Right lobe of liver (tissue), 6 donors: ENCODE measurements at regions of chr10 and their contacts with region 1.

Region 1: GRCh38 chr10:128069351-128070051 is 56.7 kb downstream of the MKI67 start:
- DNase-seq: peak in 2 of 3 donors; percentile 77 to 82
- ATAC-seq: peak; percentile 82 to 89 (median 84)
- H3K4me3 ChIP-seq: no peak overlapping the region
- H3K27ac ChIP-seq: no peak overlapping the region
- H3K4me1 ChIP-seq: no peaks in the 10 kb centered on the region
- H3K27me3 ChIP-seq: no peaks in the 10 kb centered on the region
- CTCF ChIP-seq: peak; percentile 75 to 87 (median 82)
- POLR2A ChIP-seq: no peak

Region 2: GRCh38 chr10:127906548-127907377 is 162.7 kb before region 1 on chr10 and contains the start of gene PTPRE:
- intact Hi-C with region 1: loop called in 1 of 2 experiments (anchors 10 kb)
- DNase-seq: peak; percentile 78 to 85 (median 82)
- ATAC-seq: peak; percentile 95 to 98 (median 98)
- H3K4me3 ChIP-seq: peak within 1 kb of the TSS; percentile 49 to 63 (median 58)
- H3K27ac ChIP-seq: peak within 1 kb of the TSS in 2 of 3 donors; percentile 37 to 67
- H3K4me1 ChIP-seq: peaks cover 0 to 8% (median 0%) of the 10 kb centered on the region in 4 donors
- H3K27me3 ChIP-seq: no peaks in the 10 kb centered on the region
- CTCF ChIP-seq: peak; percentile 56 to 91 (median 74)
- POLR2A ChIP-seq: no peak
- total RNA-seq, gene PTPRE: 2.3 to 9.2 (median 2.7) TPM

Region 3: GRCh38 chr10:128147064-128147463 is 77.6 kb after region 1 on chr10:
- intact Hi-C with region 1: loop called in 1 of 2 experiments (anchors 10 kb)
- DNase-seq: no peak
- ATAC-seq: no peak
- H3K4me3 ChIP-seq: no peak overlapping the region
- H3K27ac ChIP-seq: no peak overlapping the region
- H3K4me1 ChIP-seq: no peaks in the 10 kb centered on the region
- H3K27me3 ChIP-seq: no peaks in the 10 kb centered on the region
- CTCF ChIP-seq: no peak
- POLR2A ChIP-seq: no peak